Activated CD8-positive, alpha-beta T cell treated with anti-CD3 and anti-CD28 coated beads for 36 hours (primary cell): ENCODE measurements at regions of chr16 and their contacts with region 1.

Region 1: GRCh38 chr16:24010440-24011089 is 174.8 kb downstream of the PRKCB start:
- DNase-seq: peak; percentile 93
- ATAC-seq: peak; percentile 35
- H3K4me3 Mint-ChIP-seq: no peak overlapping the region
- H3K27ac Mint-ChIP-seq: peak overlapping the region; percentile 35
- H3K4me1 Mint-ChIP-seq: peaks cover 49% of the 10 kb centered on the region
- H3K27me3 Mint-ChIP-seq: no peaks in the 10 kb centered on the region
- CTCF ChIP-seq: peak; percentile 82

Region 2: DNA sequence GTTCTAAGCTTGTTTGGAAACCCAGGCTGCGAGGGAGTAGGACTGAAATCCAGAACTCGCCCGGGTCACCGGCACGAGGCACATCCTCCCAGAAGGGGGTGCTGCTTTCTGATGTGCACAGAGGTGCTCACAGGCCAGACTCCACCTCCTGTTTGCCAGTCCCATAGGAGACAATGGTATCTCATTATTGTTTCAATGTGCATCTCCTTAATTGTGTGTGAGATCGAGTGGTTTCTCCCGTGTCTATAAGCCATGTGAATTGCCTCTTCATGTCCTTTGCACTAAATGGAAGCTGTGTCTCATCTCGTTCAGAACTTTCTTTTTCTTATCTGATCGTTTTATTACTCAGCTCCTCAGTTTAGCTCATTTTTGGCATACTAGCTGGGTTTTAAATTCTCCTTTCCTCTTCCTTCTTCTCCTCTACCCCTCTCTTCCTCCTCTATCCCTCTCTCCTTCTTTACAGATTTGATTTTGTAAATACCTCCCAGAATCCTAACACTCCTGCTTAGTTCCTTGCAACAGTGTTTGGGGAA is 206.9 kb before region 1 on chr16:
- CTCF ChIA-PET with region 1: interaction called, 312 read pairs
- POLR2A ChIA-PET with region 1: interaction called, 4 read pairs
- intact Hi-C with region 1: loop called (anchors 1 kb)
- DNase-seq: peak; percentile 84
- ATAC-seq: peak; percentile 92
- H3K4me3 Mint-ChIP-seq: peak overlapping the region; percentile 3
- H3K27ac Mint-ChIP-seq: peak overlapping the region; percentile 1
- H3K4me1 Mint-ChIP-seq: peaks cover 14% of the 10 kb centered on the region
- H3K27me3 Mint-ChIP-seq: no peaks in the 10 kb centered on the region
- CTCF ChIP-seq: peak; percentile 75

Region 3: DNA sequence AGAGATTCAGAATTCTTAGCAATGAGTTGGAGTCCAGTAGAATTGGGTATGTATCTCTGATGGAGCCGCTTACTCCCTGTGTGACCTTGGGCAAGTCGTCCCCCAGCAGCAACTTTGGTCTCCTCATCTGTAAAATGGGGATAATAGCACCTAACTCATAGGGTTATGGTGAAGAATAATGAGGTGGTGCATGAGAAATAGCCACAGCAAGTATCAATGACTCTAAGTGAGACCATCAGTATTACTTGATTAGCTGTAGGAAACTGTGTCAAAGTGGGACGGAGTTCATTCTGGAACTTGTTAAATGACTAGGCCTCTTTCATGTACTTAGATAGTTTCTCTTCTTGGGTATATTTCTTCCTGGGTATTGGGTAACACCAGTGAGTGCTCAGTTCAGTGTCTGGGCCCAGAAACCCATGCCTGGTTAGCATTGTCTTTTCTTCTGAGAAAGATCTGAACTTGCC is 168.4 kb before region 1 on chr16:
- CTCF ChIA-PET with region 1: interaction called, 13 read pairs
- POLR2A ChIA-PET with region 1: interaction called, 7 read pairs
- intact Hi-C with region 1: no loop called
- DNase-seq: peak; percentile 81
- ATAC-seq: peak; percentile 88
- H3K4me3 Mint-ChIP-seq: peak overlapping the region; percentile 34
- H3K27ac Mint-ChIP-seq: peak overlapping the region; percentile 92
- H3K4me1 Mint-ChIP-seq: peaks cover 82% of the 10 kb centered on the region
- H3K27me3 Mint-ChIP-seq: no peaks in the 10 kb centered on the region
- CTCF ChIP-seq: no peak

Region 4: DNA sequence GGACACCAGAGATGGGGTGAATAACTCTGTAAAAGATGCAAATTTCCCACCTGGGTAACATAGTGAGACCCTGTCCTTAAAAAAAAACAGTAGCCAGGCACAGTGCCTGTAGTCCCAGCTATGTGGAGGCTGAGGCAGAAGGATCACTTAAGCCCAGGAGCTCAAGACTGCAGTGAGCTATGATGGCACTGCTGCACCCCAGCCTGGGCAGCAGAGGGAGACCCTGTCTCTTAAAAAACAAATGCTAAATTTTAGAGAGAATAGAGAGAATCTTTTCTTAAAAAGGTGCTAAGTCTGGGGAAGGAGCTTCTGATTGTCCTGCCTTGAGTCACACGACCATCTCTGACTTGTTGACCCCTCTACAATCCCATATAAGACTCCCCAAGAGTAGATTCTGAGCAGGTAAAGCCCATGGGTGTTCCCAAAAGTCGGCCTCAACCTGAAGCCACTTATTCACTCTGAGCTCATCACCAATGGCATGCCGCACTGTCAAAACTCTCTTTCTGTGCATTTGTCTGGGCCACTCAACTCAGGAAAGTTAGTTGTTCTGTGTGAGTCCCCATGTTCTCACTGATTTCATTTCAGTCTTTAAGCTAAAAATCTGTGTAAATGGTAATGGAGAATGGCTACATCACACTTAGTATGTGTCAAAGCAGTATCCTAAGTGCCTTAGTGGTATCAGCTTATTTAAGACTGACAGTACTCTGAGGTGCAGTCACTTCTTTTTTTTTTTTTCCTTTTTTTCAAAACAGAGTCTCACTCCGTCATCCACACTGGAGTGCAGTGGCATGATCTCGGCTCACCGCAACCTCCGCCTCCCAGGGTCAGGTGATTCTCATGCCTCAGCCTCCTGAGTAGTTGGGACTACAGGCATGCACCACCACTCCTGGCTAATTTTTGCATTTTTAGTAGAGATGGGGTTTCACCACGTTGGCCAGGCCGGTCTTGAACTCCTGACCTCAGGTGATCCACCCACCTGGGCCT is 133.2 kb before region 1 on chr16:
- CTCF ChIA-PET with region 1: interaction called, 48 read pairs
- POLR2A ChIA-PET with region 1: interaction called, 4 read pairs
- intact Hi-C with region 1: no loop called
- DNase-seq: no peak
- ATAC-seq: peak; percentile 27
- H3K4me3 Mint-ChIP-seq: no peak overlapping the region
- H3K27ac Mint-ChIP-seq: peak overlapping the region; percentile 28
- H3K4me1 Mint-ChIP-seq: peaks cover 77% of the 10 kb centered on the region
- H3K27me3 Mint-ChIP-seq: no peaks in the 10 kb centered on the region
- CTCF ChIP-seq: peak; percentile 19

Region 5: DNA sequence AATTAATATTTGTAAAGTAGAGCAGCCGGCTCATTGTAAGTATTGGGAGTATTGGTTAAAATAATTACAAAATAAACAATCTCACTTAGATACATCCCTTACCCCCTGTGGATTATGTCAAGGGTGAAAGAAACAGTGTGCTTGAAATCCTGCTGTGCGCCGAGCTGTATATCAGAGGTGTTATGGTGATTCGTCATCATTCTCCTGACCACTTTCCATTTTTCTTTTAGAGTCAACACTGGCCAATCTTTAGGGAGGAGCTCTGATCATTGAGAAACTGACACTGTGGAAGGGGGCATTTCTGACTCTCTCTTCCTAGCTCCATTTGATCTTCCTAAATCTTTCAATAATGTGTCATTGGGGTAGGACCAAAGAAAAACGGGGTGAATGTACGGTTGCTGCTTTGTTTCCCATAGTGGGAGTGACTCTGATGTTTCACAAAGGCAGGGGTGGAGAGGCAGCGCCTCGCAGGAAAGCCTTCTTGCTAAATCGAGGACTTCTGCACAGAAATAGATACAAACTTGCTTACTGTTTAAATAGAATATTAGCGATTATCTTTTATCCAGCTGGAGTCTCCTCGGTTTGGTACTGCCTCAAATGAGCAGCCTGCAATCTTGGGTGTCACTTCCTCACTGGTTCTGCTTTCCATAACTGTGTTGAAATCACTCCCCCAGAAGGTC is 51.4 kb before region 1 on chr16:
- CTCF ChIA-PET with region 1: interaction called, 11 read pairs
- POLR2A ChIA-PET with region 1: interaction called, 3 read pairs
- intact Hi-C with region 1: loop called (anchors 10 kb)
- DNase-seq: peak; percentile 50
- ATAC-seq: peak; percentile 66
- H3K4me3 Mint-ChIP-seq: peak overlapping the region; percentile 67
- H3K27ac Mint-ChIP-seq: peak overlapping the region; percentile 90
- H3K4me1 Mint-ChIP-seq: peaks cover 87% of the 10 kb centered on the region
- H3K27me3 Mint-ChIP-seq: no peaks in the 10 kb centered on the region
- CTCF ChIP-seq: no peak

Region 6: GRCh38 chr16:23994615-23995014 is 15.9 kb before region 1 on chr16:
- CTCF ChIA-PET with region 1: interaction called, 41 read pairs
- POLR2A ChIA-PET with region 1: no interaction called
- intact Hi-C with region 1: no loop called
- DNase-seq: no peak
- ATAC-seq: no peak
- H3K4me3 Mint-ChIP-seq: no peak overlapping the region
- H3K27ac Mint-ChIP-seq: no peak overlapping the region
- H3K4me1 Mint-ChIP-seq: peaks cover 24% of the 10 kb centered on the region
- H3K27me3 Mint-ChIP-seq: no peaks in the 10 kb centered on the region
- CTCF ChIP-seq: no peak

Region 7: GRCh38 chr16:24022797-24023196 is 12.2 kb after region 1 on chr16:
- CTCF ChIA-PET with region 1: interaction called, 16 read pairs
- POLR2A ChIA-PET with region 1: interaction called, 6 read pairs
- intact Hi-C with region 1: no loop called
- DNase-seq: no peak
- ATAC-seq: no peak
- H3K4me3 Mint-ChIP-seq: no peak overlapping the region
- H3K27ac Mint-ChIP-seq: no peak overlapping the region
- H3K4me1 Mint-ChIP-seq: peaks cover 20% of the 10 kb centered on the region
- H3K27me3 Mint-ChIP-seq: no peaks in the 10 kb centered on the region
- CTCF ChIP-seq: no peak